ENCODE measurements at regions of chr17 and their contacts with region 1.

Region 1: DNA sequence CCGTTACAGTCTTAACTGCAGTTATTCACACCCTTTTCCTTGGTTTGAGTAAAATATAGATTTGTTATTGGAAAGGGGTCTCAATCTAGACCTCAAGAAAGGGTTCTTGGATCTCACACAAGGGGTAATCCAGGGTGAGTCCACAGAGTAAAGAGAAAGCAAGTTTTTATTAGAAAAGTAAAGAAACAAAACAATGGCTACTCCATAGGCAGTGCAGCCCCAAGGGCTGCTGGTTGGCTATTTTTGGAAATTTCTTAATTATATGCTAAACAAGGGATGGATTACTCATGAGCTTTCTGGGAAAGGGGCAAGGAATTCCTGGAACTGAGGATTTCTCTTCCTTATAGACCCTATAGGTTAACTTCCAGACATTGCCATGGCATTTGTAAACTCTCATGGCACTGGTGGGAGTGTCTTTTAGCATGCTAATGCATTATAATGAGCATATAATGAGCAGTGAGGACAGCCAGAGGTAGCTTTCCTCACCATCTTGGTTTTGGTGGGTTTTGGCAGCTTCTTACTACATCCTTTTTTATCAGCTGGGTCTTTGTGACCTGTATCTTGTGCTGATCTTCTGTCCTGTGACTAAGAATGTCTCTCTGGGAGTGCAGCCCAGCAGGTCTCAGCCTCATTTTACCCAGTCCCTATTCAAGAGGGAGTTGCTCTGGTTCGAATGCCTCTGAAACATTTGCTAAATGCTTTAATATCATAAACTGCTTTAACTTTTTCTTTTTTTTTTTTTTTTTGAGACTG is 24.4 kb upstream of the MILR1 start:
- DNase-seq: no peak
- H3K4me3 ChIP-seq: no peak overlapping the region
- CTCF ChIP-seq: no peak

Region 2: GRCh38 chr17:63751806-63752205 is 672.7 kb before region 1 on chr17:
- in situ Hi-C with region 1: no loop called
- DNase-seq: no peak
- H3K4me3 ChIP-seq: no peak overlapping the region
- CTCF ChIP-seq: no peak

Region 3: GRCh38 chr17:64479650-64480049 is 55.1 kb after region 1 on chr17:
- in situ Hi-C with region 1: loop called (anchors 5 kb)
- DNase-seq: no peak
- H3K4me3 ChIP-seq: no peak overlapping the region
- CTCF ChIP-seq: no peak